Left ventricle myocardium superior (tissue), 1 donor: ENCODE measurements at regions of chr2 and their contacts with region 1.

Region 1: GRCh38 chr2:58448065-58448507 is 207.0 kb upstream of the FANCL start:
- DNase-seq: peak; percentile 34
- ATAC-seq: peak; percentile 58

Region 2: GRCh38 chr2:57602733-57603132 is 845.4 kb before region 1 on chr2:
- intact Hi-C with region 1: no loop called
- DNase-seq: no peak
- ATAC-seq: no peak

Region 3: DNA sequence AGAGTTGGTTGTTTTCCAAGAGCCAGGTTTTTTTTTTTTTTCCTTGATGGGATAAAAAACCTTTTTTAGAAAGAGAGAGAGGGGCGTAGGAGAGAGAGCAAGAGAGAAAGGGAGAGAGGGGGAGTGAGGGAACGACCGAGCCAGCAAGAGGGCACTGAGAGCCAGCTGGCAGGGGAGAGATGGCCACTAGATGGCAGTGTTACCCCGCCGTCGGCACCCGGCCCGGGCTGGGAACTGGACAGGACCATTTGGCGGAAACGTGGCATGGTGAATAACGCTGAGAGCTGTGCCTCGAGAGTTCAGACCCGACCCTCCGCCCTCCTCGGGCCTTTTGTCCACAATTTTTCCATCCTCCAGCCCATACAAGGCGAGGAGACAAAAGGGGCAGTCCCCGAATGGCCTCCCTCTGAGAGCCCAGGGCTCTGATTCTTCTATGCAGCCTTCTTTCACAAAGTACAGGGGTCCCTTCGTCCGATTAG is 688.2 kb before region 1 on chr2:
- intact Hi-C with region 1: loop called (anchors 10 kb)
- DNase-seq: peak; percentile 84
- ATAC-seq: peak; percentile 99

Region 4: DNA sequence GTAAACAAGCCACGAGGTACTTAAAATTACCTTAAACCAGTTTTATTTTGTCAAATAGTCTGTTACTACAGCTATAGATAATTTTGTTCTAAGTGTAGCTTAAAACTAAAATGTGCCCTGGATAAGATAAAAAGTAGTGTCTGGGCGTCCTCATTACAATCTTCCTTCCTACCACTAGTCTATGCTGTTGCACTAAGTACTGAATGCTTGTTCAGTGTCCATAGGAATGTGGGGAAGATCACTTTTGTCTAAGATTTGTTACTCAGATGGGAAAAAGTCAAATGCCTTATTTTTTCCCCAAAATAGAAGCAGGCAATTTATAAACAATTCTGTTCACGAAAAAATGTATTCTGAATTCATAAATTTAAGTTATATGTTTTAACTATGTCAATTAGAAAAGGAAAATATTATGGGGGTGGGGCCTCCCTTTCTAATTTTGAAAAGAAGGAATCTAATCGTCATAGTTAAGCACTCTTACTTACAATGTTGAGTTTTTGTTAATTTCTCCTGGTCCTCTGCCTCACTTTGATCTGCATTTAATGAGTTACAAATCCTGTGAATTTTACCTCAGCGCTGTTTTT is 541.8 kb before region 1 on chr2:
- intact Hi-C with region 1: loop called (anchors 5 kb)
- DNase-seq: no peak
- ATAC-seq: peak; percentile 69

Region 5: GRCh38 chr2:58369594-58369993 is 78.5 kb before region 1 on chr2:
- intact Hi-C with region 1: no loop called
- DNase-seq: no peak
- ATAC-seq: no peak

Region 6: GRCh38 chr2:58543432-58543831 is 95.3 kb after region 1 on chr2:
- intact Hi-C with region 1: no loop called
- DNase-seq: no peak
- ATAC-seq: no peak

Region 7: GRCh38 chr2:58584606-58585118 is 136.6 kb after region 1 on chr2:
- intact Hi-C with region 1: no loop called
- DNase-seq: no peak
- ATAC-seq: no peak